Activated B cell treated with CpG ODN at 0.5 μM for 24 hours (primary cell): ENCODE measurements at regions of chr6 and their contacts with region 1.

Region 1: DNA sequence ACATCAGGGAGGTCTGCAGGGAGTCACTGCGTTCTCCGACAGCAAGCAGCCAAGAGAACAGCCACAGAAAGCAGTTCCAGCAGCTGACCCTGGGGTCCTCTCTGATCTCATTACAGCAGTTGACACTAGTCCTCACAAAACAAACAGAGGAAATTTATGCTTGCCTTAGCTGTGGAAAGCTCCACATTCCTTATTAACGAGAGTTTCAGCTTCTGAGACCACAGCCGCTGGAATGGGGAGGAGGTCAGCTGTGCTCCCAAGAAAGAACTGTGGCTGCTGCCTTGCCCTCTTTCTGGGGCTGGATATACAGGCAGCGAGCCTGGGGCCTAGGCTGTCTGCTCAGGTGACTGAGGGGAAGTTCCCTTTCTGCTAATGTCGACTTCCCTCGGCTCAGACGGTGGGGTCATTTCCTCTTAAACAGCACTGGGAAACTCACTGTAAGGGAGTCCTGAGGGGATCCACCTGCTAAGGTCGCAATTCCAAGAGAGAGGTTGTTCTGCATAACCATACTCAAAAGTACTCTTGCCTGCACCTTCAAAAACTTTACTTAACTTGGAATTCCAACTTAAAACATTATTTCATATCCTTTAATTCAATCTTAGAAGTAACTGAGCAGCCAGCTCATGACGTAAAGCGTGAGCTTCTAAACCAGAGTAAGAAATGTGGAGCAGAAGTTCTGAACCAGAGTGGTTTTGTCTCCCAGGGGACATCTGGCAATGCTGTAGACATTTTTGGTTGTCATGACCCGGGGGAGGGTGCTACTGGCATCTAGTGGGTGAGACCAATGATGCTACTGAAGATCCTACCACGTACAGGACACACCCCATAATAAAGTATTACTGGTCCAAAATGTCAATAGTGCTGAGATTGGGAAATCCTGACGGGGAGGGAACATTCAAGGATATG is 80.3 kb downstream of the BACH2 start:
- DNase-seq: peak; percentile 52
- ATAC-seq: peak; percentile 80
- H3K4me3 Mint-ChIP-seq: peak overlapping the region; percentile 73
- H3K27ac Mint-ChIP-seq: no peak overlapping the region
- H3K4me1 Mint-ChIP-seq: peaks cover under 1% of the 10 kb centered on the region
- H3K27me3 Mint-ChIP-seq: no peaks in the 10 kb centered on the region
- CTCF ChIP-seq: no peak

Region 2: GRCh38 chr6:88683734-88684133 is 1532.6 kb before region 1 on chr6:
- CTCF ChIA-PET with region 1: no interaction called
- POLR2A ChIA-PET with region 1: no interaction called
- intact Hi-C with region 1: no loop called
- DNase-seq: no peak
- ATAC-seq: no peak
- H3K4me3 Mint-ChIP-seq: no peak overlapping the region
- H3K27ac Mint-ChIP-seq: no peak overlapping the region
- H3K4me1 Mint-ChIP-seq: no peaks in the 10 kb centered on the region
- H3K27me3 Mint-ChIP-seq: no peaks in the 10 kb centered on the region
- CTCF ChIP-seq: no peak

Region 3: DNA sequence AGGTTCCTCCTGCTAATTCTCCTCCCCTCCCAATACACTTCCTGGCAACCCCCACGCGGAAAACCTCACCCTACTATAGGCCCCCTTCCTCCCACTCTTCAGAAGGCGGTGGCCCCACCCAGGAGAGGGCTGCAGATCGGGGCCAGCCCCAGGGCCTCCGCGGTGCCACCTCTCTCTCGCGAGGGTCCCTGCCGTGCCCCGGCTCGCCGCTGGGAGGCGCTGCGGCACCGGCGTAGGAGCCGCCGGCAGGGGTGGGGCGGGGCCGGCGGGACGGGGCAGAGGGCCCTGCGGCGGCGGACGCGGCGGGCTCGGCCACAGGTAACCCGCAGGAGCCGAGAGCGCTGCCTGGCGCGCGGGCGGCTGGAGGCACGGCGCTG is 783.5 kb before region 1 on chr6 and contains the start of gene ANKRD6:
- CTCF ChIA-PET with region 1: no interaction called
- POLR2A ChIA-PET with region 1: no interaction called
- intact Hi-C with region 1: loop called (anchors 10 kb)
- DNase-seq: peak; percentile 95
- ATAC-seq: peak; percentile 97
- H3K4me3 Mint-ChIP-seq: peak within 1 kb of the TSS; percentile 86
- H3K27ac Mint-ChIP-seq: peak within 1 kb of the TSS; percentile 41
- H3K4me1 Mint-ChIP-seq: peaks cover 11% of the 10 kb centered on the region
- H3K27me3 Mint-ChIP-seq: peaks cover 4% of the 10 kb centered on the region
- CTCF ChIP-seq: no peak
- total RNA-seq, gene ANKRD6: 6.6 and 9.6 TPM in 2 replicates

Region 4: GRCh38 chr6:89975991-89976700 is 240.2 kb before region 1 on chr6:
- CTCF ChIA-PET with region 1: interaction called, 18 read pairs
- POLR2A ChIA-PET with region 1: interaction called, 3 read pairs
- intact Hi-C with region 1: no loop called
- DNase-seq: no peak
- ATAC-seq: no peak
- H3K4me3 Mint-ChIP-seq: no peak overlapping the region
- H3K27ac Mint-ChIP-seq: peak overlapping the region; percentile 26
- H3K4me1 Mint-ChIP-seq: peaks cover 4% of the 10 kb centered on the region
- H3K27me3 Mint-ChIP-seq: no peaks in the 10 kb centered on the region
- CTCF ChIP-seq: no peak

Region 5: DNA sequence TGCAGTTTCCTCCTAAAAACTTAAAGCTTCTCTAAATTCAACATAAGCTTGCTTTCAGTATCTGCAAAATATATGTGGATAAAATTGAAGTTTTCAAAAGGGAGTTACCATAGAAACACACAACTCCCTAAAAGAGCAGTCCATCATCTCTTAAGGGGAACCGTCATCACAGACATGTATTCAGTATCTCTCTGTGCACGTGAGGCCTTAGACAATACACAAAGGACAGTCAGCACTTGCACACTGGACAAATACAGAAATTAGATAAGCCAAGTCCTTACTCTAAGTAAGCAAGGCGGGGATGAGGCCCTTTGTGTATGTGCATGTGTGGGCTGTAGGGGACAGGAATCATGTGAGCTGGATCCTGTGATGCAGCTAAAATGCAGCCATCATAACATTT is 56.3 kb before region 1 on chr6:
- CTCF ChIA-PET with region 1: no interaction called
- POLR2A ChIA-PET with region 1: interaction called, 16 read pairs
- intact Hi-C with region 1: no loop called
- DNase-seq: no peak
- ATAC-seq: peak; percentile 34
- H3K4me3 Mint-ChIP-seq: peak overlapping the region; percentile 13
- H3K27ac Mint-ChIP-seq: peak overlapping the region; percentile 64
- H3K4me1 Mint-ChIP-seq: peaks cover 78% of the 10 kb centered on the region
- H3K27me3 Mint-ChIP-seq: no peaks in the 10 kb centered on the region
- CTCF ChIP-seq: no peak

Region 6: DNA sequence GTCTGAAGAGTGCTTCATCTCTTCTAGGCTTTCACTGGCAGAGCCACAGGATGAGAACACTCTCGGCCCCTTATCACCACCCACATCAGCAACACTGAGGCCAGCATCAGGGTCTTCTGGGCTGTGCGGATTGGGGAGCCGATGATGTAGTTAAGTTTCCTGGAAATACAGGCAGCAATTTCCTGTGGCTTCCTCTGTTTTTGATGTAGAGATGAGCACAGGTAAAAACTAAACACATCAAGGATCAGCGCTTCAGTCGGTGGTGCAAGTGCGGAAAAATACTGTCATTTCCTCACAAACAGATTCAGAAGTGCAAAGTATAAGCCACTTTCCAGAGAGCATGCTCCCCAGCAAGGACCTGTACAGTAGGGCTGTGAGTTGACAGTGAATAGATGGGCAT is 17.7 kb after region 1 on chr6:
- CTCF ChIA-PET with region 1: interaction called, 3 read pairs
- POLR2A ChIA-PET with region 1: no interaction called
- intact Hi-C with region 1: loop called (anchors 2 kb)
- DNase-seq: no peak
- ATAC-seq: peak; percentile 31
- H3K4me3 Mint-ChIP-seq: no peak overlapping the region
- H3K27ac Mint-ChIP-seq: peak overlapping the region; percentile 75
- H3K4me1 Mint-ChIP-seq: peaks cover 71% of the 10 kb centered on the region
- H3K27me3 Mint-ChIP-seq: no peaks in the 10 kb centered on the region
- CTCF ChIP-seq: no peak

Region 7: GRCh38 chr6:90296346-90297114 is 80.2 kb after region 1 on chr6 and contains the start of gene BACH2:
- CTCF ChIA-PET with region 1: interaction called, 16 read pairs
- POLR2A ChIA-PET with region 1: interaction called, 29 read pairs
- intact Hi-C with region 1: loop called (anchors 1 kb)
- DNase-seq: peak; percentile 85
- ATAC-seq: peak; percentile 76
- H3K4me3 Mint-ChIP-seq: peak within 1 kb of the TSS; percentile 89
- H3K27ac Mint-ChIP-seq: peak within 1 kb of the TSS; percentile 89
- H3K4me1 Mint-ChIP-seq: peaks cover 55% of the 10 kb centered on the region
- H3K27me3 Mint-ChIP-seq: no peaks in the 10 kb centered on the region
- CTCF ChIP-seq: no peak
- total RNA-seq, gene BACH2: 79.6 and 90.4 TPM in 2 replicates

Region 8: GRCh38 chr6:90338422-90338821 is 122.1 kb after region 1 on chr6:
- CTCF ChIA-PET with region 1: no interaction called
- POLR2A ChIA-PET with region 1: no interaction called
- intact Hi-C with region 1: no loop called
- DNase-seq: no peak
- ATAC-seq: no peak
- H3K4me3 Mint-ChIP-seq: no peak overlapping the region
- H3K27ac Mint-ChIP-seq: no peak overlapping the region
- H3K4me1 Mint-ChIP-seq: no peaks in the 10 kb centered on the region
- H3K27me3 Mint-ChIP-seq: no peaks in the 10 kb centered on the region
- CTCF ChIP-seq: no peak

Region 9: GRCh38 chr6:90523779-90524310 is 307.5 kb after region 1 on chr6:
- CTCF ChIA-PET with region 1: no interaction called
- POLR2A ChIA-PET with region 1: no interaction called
- intact Hi-C with region 1: no loop called
- DNase-seq: no peak
- ATAC-seq: no peak
- H3K4me3 Mint-ChIP-seq: no peak overlapping the region
- H3K27ac Mint-ChIP-seq: no peak overlapping the region
- H3K4me1 Mint-ChIP-seq: no peaks in the 10 kb centered on the region
- H3K27me3 Mint-ChIP-seq: no peaks in the 10 kb centered on the region
- CTCF ChIP-seq: no peak